ENCODE measurements at regions of chr19 and their contacts with region 1.

Region 1: DNA sequence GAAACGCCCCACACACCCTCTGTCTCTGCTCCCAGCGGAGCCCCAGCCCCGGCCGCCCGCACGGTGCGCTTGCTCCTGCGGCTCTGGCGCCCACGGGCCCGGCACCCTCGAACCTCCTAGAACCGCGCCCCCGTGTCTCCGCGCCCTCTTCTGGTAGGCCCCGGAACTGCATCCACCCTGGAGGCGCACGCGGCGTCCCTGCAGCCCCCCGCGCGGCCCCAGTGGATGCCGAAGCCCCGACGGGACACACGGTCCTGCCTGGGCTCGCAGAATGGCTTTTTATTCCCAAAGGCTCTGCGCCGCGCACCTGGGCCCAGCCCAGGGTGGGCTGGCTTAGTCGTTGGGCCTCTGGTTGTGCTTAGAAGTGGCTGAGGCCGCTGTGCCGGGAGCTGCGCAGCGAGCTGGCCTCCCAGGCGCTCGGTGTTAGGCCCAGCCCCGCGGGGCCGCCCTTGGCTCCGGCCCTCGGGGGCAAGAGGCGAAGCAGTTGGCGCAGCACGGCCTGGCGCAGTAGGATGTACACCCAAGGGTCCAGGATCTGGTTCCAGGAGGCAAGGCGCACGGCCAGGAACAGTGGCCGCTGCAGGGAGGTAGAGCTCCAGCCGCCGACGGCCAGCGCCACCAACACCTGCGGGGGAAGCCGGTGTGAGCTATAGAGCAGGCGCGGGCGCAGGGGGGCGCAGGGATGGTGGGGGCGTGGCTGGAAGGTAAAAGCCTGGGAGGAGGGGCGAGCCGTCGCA is 2.8 kb downstream of the PTGER1 start:
- DNase-seq: peak in 9 of 10 donors; percentile 31 to 94 (median 74)

Region 2: DNA sequence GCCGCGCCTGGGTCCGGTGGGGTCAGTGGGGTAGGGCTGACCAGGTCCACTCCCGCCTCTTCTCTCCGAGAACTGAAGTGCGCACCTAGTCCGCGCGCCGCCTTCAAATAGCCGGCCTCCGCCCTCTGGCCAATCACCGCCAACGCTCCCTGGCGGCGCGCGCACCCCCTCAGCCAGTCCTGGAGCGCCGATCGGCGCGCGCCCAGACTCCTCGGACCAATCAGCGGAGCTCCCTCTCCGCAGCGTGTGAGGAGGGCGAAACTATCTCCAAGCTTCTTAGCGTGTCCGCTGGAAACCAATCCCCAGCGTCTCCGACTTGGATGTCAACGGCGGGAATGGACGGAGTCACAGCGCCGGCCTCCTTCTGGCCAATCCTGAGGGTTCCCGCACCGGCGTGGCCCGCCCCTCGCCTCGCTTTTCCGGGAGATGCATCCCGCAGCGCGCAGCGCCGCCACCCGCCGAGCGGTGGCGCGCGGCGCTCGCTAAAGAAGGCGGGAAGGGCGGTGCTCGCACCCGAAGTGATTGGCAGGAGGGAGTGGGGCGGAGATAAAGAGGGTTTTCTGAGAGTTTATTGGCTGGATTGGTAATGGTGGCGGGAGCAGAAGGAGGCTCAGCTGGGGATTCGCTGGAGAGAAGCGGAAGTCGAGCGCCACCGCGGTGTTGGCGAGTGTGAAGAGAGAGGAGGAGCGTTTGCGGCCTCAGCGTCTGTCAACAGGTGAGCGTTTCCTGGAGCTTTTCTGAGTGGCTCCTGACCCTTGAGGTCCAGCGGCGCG is 335.7 kb before region 1 on chr19 and contains the start of gene ASF1B:
- intact Hi-C with region 1: loop called (anchors 5 kb)
- DNase-seq: peak; percentile 96 to 100 (median 99)

Region 3: GRCh38 chr19:14432791-14433553 is 39.4 kb before region 1 on chr19 and contains the start of gene PKN1:
- intact Hi-C with region 1: loop called (anchors 5 kb)
- DNase-seq: peak in 6 of 10 donors; percentile 28 to 93 (median 58)

Measured in posterior cingulate gyrus (tissue), 11 donors.